ENCODE measurements at regions of chr11 and their contacts with region 1.

Region 1: GRCh38 chr11:46238967-46239800 is 38.3 kb upstream of the CREB3L1 start:
- DNase-seq: peak; percentile 86
- H3K4me3 Mint-ChIP-seq: peak overlapping the region; percentile 75
- H3K27ac Mint-ChIP-seq: no peak overlapping the region
- H3K4me1 Mint-ChIP-seq: peaks cover 36% of the 10 kb centered on the region
- H3K27me3 Mint-ChIP-seq: peaks cover 4% of the 10 kb centered on the region

Region 2: GRCh38 chr11:45964911-45965389 is 274.2 kb before region 1 on chr11:
- CTCF ChIA-PET with region 1: interaction called, 5 read pairs
- intact Hi-C with region 1: loop called (anchors 2 kb)
- DNase-seq: peak; percentile 72
- H3K4me3 Mint-ChIP-seq: no peak overlapping the region
- H3K27ac Mint-ChIP-seq: no peak overlapping the region
- H3K4me1 Mint-ChIP-seq: no peaks in the 10 kb centered on the region
- H3K27me3 Mint-ChIP-seq: no peaks in the 10 kb centered on the region

Region 3: DNA sequence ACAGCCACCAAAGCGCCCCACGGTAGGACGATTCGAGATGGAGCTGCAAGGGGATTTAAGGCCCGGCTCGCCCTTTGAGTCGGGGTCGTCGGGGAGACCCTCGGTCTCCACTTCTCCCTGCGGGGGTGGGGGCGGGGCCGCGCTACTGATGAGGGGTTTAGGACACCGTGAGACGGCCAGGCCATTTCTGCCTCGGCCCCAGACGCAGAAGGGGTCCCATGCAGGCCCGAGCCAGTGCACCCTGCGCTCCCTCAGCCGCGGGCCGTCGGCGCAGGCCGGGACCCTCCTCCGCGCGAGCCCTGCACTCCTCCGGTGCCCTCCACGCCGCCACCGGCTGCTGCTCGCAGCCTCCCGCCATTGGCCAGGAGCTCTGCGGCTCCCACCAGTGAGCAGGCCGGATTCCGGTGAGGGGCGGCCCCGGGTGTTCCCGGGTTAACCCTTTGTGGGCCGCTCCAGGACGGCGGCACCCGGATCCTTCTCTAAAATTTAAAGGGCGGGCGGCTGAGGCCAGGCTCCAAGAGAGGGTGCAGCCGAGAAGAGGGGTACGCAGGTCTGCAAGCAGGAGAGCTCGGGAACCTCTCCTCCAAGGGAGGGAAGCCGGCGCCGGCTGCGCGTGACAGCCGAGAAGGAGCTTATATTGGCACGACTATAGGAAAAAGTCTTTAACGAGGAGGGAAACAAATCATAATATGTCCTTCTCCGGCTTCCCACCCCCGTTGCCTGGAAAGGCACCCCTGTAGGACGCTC is 56.3 kb after region 1 on chr11:
- CTCF ChIA-PET with region 1: interaction called, 13 read pairs
- intact Hi-C with region 1: no loop called
- DNase-seq: peak; percentile 71
- H3K4me3 Mint-ChIP-seq: peak overlapping the region; percentile 76
- H3K27ac Mint-ChIP-seq: no peak overlapping the region
- H3K4me1 Mint-ChIP-seq: peaks cover 11% of the 10 kb centered on the region
- H3K27me3 Mint-ChIP-seq: peaks cover 6% of the 10 kb centered on the region

Region 4: DNA sequence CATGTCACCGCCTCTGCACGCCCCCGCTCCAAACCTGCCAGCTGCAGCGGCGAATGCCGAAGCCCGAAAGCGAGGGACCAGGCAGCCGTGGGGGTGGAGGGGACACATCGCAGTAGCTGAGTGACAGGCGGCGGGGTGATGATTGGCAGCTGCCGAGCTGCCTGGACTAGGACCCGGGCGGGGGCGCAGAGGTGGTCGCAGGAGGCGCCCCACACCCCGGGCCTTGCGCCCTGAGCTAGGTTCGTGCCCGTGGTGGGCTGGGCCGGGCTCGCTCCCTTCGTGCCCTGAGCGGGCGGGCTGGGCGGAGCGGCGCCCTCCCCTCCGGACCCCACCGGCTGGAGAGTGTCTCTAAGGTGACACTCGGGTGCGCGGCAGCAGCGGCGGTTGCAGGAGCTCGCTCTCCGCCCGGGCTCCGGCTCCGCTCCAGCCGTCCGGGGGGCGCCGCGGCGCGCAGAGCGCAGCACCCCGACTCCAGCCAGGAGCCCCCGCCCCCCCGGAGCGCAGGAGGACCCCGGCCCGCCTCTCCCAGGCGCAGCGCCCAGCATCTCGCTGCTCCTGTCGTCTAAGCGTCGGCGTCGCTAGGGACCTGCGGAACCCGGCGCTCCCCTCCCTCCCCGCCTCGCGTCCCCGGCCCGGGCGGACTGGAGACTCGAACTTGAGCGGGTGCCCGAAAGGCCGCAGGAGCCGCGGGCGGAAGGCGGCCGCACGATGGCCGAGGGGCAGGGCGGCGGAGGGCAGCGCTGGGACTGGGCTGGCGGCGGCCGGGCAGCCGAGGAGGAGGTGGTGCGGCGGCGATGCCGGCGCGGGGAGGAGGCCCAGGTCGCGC is 93.6 kb after region 1 on chr11:
- CTCF ChIA-PET with region 1: interaction called, 23 read pairs
- intact Hi-C with region 1: loop called (anchors 1 kb)
- DNase-seq: peak; percentile 62
- H3K4me3 Mint-ChIP-seq: peak overlapping the region; percentile 80
- H3K27ac Mint-ChIP-seq: no peak overlapping the region
- H3K4me1 Mint-ChIP-seq: peaks cover 76% of the 10 kb centered on the region
- H3K27me3 Mint-ChIP-seq: no peaks in the 10 kb centered on the region

Region 5: GRCh38 chr11:46352063-46352841 is 113.1 kb after region 1 on chr11:
- CTCF ChIA-PET with region 1: interaction called, 50 read pairs
- intact Hi-C with region 1: no loop called
- DNase-seq: peak; percentile 81
- H3K4me3 Mint-ChIP-seq: peak overlapping the region; percentile 77
- H3K27ac Mint-ChIP-seq: peak overlapping the region; percentile 90
- H3K4me1 Mint-ChIP-seq: peaks cover 77% of the 10 kb centered on the region
- H3K27me3 Mint-ChIP-seq: no peaks in the 10 kb centered on the region

Region 6: DNA sequence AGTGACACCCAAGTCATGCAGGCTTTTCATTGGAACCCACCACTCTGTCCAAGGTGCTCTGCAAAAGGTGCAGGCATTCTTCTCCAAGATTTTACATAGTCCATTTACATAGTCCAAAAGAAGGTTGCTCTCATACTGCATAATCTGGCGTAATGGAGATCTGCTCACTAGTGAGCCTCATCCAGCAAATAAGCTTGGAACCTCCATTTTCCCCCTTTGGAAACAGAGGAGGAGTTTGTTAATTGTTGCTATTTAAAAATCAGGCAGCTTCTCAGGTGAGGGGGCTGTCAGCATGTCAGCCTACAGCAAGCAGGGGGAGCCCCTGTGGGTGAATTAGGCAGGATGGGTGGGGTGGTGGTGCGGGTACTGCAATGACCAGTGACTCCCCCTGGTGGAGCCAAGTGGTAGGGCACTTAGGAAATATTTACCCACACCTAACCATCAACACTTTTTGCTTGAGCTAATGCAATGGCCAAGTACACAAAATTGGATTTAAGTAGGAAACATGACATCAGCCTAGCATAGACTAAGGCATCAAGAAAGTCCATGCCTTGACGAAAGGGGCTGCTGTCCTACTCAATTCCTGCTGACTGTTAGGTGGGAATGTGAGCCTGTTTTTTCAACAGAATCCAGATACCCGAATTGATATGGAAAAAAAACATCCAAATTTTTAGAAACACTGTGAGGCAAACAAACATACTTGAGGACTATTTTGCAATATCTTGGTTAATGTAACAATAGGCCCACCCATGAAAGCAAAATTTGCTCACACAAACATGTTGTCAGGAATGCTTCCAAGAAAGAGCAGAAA is 290.1 kb after region 1 on chr11:
- CTCF ChIA-PET with region 1: no interaction called
- intact Hi-C with region 1: loop called (anchors 2 kb)
- DNase-seq: peak; percentile 90
- H3K4me3 Mint-ChIP-seq: no peak overlapping the region
- H3K27ac Mint-ChIP-seq: no peak overlapping the region
- H3K4me1 Mint-ChIP-seq: peaks cover 33% of the 10 kb centered on the region
- H3K27me3 Mint-ChIP-seq: no peaks in the 10 kb centered on the region

Measured in activated naive CD4-positive, alpha-beta T cell treated with anti-CD3 and anti-CD28 coated beads for 36 hours (primary cell).